Activated T-helper 1 cell treated with anti-CD3 and anti-CD28 coated beads, Interleukin-12 subunit alpha, Interleukin-12 subunit beta, Interleukin-2, Interleukin-4 antibody, amounts not matched to agents 30 ng/mL and 10 ng/mL and 1 ng/mL, durations not matched to agents 14 hours and 24 hours and 36 hours (primary cell): ENCODE measurements at regions of chr3 and their contacts with region 1.

Region 1: GRCh38 chr3:127672516-127673190 is at the start of gene ABTB1:
- DNase-seq: peak; percentile 82
- H3K4me3 Mint-ChIP-seq: peak within 1 kb of the TSS; percentile 92
- H3K27ac Mint-ChIP-seq: peak within 1 kb of the TSS; percentile 97
- H3K4me1 Mint-ChIP-seq: peaks cover 14% of the 10 kb centered on the region
- H3K27me3 Mint-ChIP-seq: no peaks in the 10 kb centered on the region
- total RNA-seq, gene ABTB1: 9.7 TPM in 2 replicates

Region 2: DNA sequence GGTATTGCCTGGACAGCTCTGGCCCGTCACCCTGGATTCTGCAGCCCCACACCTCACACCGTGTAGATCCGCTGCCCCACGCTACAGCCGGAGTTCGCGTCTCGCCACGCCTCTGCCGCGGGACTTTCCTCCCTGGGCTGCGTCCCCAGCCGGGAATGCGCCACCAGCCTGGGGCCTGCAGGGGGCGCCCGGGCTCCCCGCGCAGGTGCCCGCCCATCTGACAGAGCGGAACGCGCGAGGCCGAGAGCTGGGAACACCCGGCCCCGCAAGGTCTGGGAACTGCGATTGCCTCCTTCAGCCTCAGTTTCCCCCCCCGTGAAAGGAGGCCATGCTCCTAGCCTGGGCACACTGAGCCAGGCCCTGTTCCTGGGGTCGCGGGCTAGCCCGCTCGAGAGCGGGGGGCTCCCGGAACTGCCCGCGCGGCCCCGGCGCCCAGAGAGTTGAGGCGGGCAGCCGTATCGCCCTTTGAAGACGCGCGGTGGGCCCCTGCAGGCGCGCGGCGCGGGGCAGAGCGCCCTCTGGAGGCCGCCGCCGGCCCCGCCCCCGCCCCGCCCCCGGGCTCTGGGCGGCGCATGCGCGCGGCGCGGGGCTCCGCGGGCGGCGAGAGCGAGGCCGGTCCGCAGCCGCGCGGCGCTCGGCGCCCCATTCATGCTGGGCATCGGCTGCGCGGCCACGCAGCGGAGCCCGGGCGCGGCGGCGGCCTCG is 690.0 kb before region 1 on chr3 and contains the start of gene PLXNA1:
- intact Hi-C with region 1: loop called (anchors 5 kb)
- DNase-seq: peak; percentile 87
- H3K4me3 Mint-ChIP-seq: peak within 1 kb of the TSS; percentile 81
- H3K27ac Mint-ChIP-seq: peak within 1 kb of the TSS; percentile 90
- H3K4me1 Mint-ChIP-seq: peaks cover 23% of the 10 kb centered on the region
- H3K27me3 Mint-ChIP-seq: peaks cover 4% of the 10 kb centered on the region
- total RNA-seq, gene PLXNA1: 22.1 and 25.5 TPM in 2 replicates

Region 3: GRCh38 chr3:127628788-127629466 is 43.7 kb before region 1 on chr3 and contains the start of gene PODXL2:
- intact Hi-C with region 1: loop called (anchors 2 kb)
- DNase-seq: peak; percentile 12
- H3K4me3 Mint-ChIP-seq: peak within 1 kb of the TSS; percentile 83
- H3K27ac Mint-ChIP-seq: peak within 1 kb of the TSS; percentile 62
- H3K4me1 Mint-ChIP-seq: peaks cover 16% of the 10 kb centered on the region
- H3K27me3 Mint-ChIP-seq: peaks cover 55% of the 10 kb centered on the region
- total RNA-seq, gene PODXL2: 9.7 and 10.3 TPM in 2 replicates

Region 4: GRCh38 chr3:127697551-127698240 is 25.0 kb after region 1 on chr3:
- intact Hi-C with region 1: loop called (anchors 1 kb)
- DNase-seq: peak; percentile 38
- H3K4me3 Mint-ChIP-seq: no peak overlapping the region
- H3K27ac Mint-ChIP-seq: no peak overlapping the region
- H3K4me1 Mint-ChIP-seq: no peaks in the 10 kb centered on the region
- H3K27me3 Mint-ChIP-seq: peaks cover 4% of the 10 kb centered on the region

Region 5: DNA sequence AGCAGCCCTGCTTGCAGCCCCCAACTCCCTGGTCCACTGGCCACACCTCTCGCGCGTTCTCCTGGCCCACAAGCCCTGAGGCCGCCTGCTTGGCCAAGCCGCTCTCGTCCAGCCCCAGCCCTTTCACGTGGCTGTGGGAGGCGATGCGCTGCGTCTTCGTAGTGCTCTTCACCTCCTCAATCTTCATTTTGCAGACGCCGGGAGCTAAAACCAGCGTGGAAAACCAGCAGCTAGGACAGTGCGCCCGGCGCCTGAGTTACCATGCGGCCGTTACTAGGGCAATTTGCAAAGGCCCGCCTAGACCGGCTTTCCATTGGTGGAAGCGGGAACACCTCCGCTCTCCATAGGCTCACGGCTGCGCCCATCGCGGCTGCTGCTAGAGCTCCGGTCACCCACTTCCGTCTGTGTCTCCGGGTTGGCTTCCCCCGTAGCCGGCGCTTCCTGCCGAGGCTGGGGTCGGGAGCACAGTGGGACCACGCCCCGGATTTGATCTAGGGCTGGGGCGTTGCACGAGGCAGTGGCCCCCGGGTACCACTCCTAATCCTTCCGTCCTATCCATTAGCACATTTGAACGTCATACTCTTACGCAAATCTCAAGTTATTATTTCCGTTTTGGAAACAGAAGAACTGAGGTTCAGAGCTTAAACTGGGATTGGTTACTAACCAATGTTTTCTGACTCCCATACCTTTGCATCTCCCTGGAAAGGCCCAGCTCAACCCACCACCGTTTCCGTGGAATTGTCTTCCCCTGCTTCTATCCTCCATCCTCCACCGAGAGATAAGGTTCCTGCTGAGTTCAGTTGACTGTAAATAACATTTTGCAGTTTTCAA is 451.1 kb after region 1 on chr3 and contains the start of gene RUVBL1:
- intact Hi-C with region 1: loop called (anchors 10 kb)
- DNase-seq: peak; percentile 95
- H3K4me3 Mint-ChIP-seq: peak within 1 kb of the TSS; percentile 99
- H3K27ac Mint-ChIP-seq: peak within 1 kb of the TSS; percentile 99
- H3K4me1 Mint-ChIP-seq: peaks cover 24% of the 10 kb centered on the region
- H3K27me3 Mint-ChIP-seq: peaks cover 1% of the 10 kb centered on the region
- total RNA-seq, gene RUVBL1: 135 and 137 TPM in 2 replicates